CD8-positive, alpha-beta memory T cell (primary cell): ENCODE measurements at regions of chr2 and their contacts with region 1.

Region 1: DNA sequence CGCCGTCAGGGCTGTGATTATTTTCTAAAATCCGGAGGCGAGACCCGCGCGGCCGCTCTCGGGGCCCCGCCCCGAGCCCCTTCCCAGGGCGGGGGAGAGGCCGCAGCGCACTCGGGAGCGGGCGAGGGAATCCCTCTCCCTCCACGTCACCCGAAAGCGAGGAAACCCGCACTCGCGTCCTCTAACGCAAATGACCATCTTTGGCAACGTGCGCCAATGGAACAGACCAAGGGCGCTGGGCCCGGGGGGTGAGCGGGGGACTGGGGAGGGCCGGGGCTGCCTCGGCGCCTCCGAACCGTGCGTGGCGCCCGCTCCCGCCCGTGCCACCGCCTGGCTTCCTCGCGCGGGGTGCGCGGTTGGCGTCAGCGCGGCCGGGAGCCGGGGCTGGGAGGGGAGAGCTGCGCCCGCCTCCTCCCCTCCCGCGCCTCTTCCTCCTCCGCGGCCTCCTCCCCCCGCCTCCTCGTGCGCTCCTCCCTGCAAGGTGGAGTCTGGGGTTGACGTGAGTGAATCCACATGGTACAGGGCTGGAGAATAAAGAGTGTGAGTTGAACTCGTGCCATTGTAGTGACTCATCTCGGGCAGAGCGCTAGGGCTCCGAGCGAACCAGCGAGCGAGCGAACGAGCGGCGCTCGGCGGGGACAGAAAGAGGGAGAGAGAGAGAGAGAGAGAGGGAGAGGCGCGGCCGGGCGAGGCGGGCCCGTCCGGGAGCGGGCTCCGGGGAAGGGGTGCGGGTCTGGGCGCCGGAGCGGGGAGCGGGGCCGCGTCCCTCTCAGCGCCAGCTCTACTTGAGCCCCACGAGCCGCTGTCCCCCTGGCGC is at the start of gene FOSL2:
- DNase-seq: peak; percentile 90 to 98 (median 95)
- H3K4me3 ChIP-seq: peak within 1 kb of the TSS; percentile 75
- H3K4me3 Mint-ChIP-seq: peak within 1 kb of the TSS in 5 of 7 donors; percentile 78 to 96 (median 92)
- H3K27ac ChIP-seq: peak within 1 kb of the TSS; percentile 89
- H3K27ac Mint-ChIP-seq: peak within 1 kb of the TSS; percentile 97 to 100 (median 98)
- H3K4me1 ChIP-seq: peaks cover 30% of the 10 kb centered on the region
- H3K4me1 Mint-ChIP-seq: peaks cover 21 to 28% (median 28%) of the 10 kb centered on the region in 3 donors
- H3K27me3 ChIP-seq: no peaks in the 10 kb centered on the region
- H3K27me3 Mint-ChIP-seq: peaks cover 0 to 6% of the 10 kb centered on the region in 2 donors
- total RNA-seq, gene FOSL2: 46.2 to 47.3 TPM

Region 2: DNA sequence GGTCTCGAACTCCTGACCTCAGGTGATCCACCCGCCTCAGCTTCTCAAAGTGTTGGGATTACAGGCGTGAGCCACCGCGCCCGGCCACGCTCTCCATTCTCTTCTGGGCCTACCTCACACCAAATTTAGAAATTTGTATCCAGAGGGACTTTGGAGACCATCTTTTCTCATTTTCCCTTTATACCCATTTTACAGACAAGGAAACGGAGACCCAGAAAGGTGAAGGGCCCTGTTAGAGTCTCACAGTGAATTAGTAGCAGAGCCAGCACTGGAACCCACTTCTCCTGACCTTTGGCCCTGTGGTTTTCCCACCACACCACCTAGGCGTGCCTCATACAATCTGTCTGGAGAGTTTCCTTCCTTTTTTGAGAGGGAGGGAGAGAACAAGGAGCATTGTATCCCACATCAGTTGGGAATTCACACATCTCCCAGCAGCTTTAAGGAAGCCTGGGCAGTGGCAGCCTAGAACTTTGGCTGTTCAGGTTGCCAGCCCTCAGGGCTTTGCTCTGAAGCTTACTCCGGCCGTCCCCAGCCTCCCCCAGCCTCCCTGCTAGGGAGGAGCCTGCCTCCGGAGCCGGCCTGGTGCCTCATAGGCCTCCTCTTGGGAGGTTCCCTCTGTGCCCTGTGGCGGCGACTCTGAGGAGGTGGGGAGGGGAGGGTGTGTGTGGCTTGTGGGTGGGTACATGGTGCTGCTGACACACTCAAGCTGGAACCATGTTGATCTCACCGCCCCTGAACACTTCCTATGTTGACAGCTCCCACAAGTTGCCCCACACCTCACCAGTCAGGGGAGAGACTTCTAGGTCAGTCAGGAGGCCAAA is 14.0 kb after region 1 on chr2:
- CTCF ChIA-PET with region 1: interaction called, 14 read pairs
- POLR2A ChIA-PET with region 1: interaction called, 21 read pairs
- DNase-seq: peak; percentile 39 to 84 (median 75)
- H3K4me3 ChIP-seq: no peak overlapping the region
- H3K4me3 Mint-ChIP-seq: peak overlapping the region; percentile 57 to 83 (median 76)
- H3K27ac ChIP-seq: peak overlapping the region; percentile 38
- H3K27ac Mint-ChIP-seq: peak overlapping the region; percentile 85 to 100 (median 99)
- H3K4me1 ChIP-seq: peaks cover 79% of the 10 kb centered on the region
- H3K4me1 Mint-ChIP-seq: peaks cover 78 to 86% (median 81%) of the 10 kb centered on the region in 3 donors
- H3K27me3 ChIP-seq: no peaks in the 10 kb centered on the region
- H3K27me3 Mint-ChIP-seq: peaks cover 0 to 3% of the 10 kb centered on the region in 2 donors

Region 3: GRCh38 chr2:28413142-28413898 is 20.8 kb after region 1 on chr2:
- CTCF ChIA-PET with region 1: interaction called, 9 read pairs
- POLR2A ChIA-PET with region 1: interaction called, 21 read pairs
- DNase-seq: no peak
- H3K4me3 ChIP-seq: no peak overlapping the region
- H3K4me3 Mint-ChIP-seq: peak overlapping the region in 3 of 7 donors; percentile 1 to 59 (median 2)
- H3K27ac ChIP-seq: no peak overlapping the region
- H3K27ac Mint-ChIP-seq: peak overlapping the region; percentile 29 to 100 (median 80)
- H3K4me1 ChIP-seq: peaks cover 39% of the 10 kb centered on the region
- H3K4me1 Mint-ChIP-seq: peaks cover 42 to 57% (median 47%) of the 10 kb centered on the region in 3 donors
- H3K27me3 ChIP-seq: no peaks in the 10 kb centered on the region
- H3K27me3 Mint-ChIP-seq: peaks cover 0 to 3% of the 10 kb centered on the region in 2 donors